ENCODE measurements at regions of chr3 and their contacts with region 1.

Region 1: GRCh38 chr3:8254489-8254888 is 247.1 kb upstream of the LMCD1 start:
- DNase-seq: no peak
- ATAC-seq: no peak
- H3K4me3 ChIP-seq: no peak overlapping the region
- H3K4me3 Mint-ChIP-seq: no peak overlapping the region
- H3K27ac ChIP-seq: no peak overlapping the region
- H3K27ac Mint-ChIP-seq: no peak overlapping the region
- H3K4me1 ChIP-seq: no peaks in the 10 kb centered on the region
- H3K4me1 Mint-ChIP-seq: no peaks in the 10 kb centered on the region
- H3K27me3 ChIP-seq: no peaks in the 10 kb centered on the region
- H3K27me3 Mint-ChIP-seq: peaks cover 11% of the 10 kb centered on the region
- CTCF ChIP-seq: no peak

Region 2: DNA sequence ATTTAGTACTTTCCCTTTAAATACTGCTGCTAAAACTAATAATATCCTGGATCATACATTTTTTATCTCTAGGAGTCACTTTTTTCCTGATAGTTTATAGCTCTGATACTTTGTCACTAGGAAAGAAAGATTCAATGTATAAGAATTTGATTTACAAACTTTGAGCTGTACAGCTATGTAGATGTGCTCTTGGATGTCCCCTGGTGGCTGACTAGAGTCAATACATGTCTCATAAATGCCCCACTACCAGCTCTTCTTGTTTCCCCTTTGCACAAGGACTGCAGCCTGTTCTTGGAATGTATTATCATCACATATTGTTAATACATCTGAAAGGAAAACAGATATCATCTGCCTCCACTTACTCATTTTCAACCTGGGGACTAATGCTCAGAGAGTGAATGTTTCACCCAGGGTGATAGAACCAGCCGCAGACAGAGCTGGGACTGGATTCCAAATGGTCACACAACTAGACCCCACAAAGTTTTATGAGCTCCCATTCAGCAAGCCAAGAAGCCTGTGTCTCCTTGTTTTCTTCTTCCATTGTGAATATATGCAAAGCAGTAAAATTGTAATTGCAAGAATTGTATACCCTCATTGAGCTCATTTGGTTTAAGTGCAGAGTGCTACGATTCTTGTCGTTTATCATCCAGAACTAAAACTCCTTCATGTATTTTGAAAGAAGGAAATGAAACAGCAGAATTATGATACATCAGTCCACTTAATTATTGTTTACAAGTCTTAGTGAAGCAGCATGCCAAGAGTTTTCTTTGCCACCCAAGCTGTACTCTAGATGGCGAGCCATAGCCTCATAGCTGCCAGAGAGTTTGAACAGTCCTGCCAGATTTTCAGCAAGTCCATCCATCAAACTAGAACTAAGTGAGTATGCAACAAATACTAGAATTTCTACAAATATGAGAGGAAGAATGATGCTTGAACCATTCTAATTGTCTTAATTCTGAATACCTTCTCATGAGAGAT is 14.5 kb before region 1 on chr3:
- CTCF ChIA-PET with region 1: interaction called, 14 read pairs
- POLR2A ChIA-PET with region 1: no interaction called
- intact Hi-C with region 1: no loop called
- DNase-seq: peak in 4 of 9 experiments; percentile 11 to 51 (median 32)
- ATAC-seq: no peak
- H3K4me3 ChIP-seq: no peak overlapping the region
- H3K4me3 Mint-ChIP-seq: no peak overlapping the region
- H3K27ac ChIP-seq: no peak overlapping the region
- H3K27ac Mint-ChIP-seq: no peak overlapping the region
- H3K4me1 ChIP-seq: no peaks in the 10 kb centered on the region
- H3K4me1 Mint-ChIP-seq: no peaks in the 10 kb centered on the region
- H3K27me3 ChIP-seq: no peaks in the 10 kb centered on the region
- H3K27me3 Mint-ChIP-seq: no peaks in the 10 kb centered on the region
- CTCF ChIP-seq: peak; percentile 77

Region 3: GRCh38 chr3:8298021-8298954 is 43.8 kb after region 1 on chr3:
- CTCF ChIA-PET with region 1: no interaction called
- POLR2A ChIA-PET with region 1: no interaction called
- intact Hi-C with region 1: no loop called
- DNase-seq: no peak
- ATAC-seq: no peak
- H3K4me3 ChIP-seq: no peak overlapping the region
- H3K4me3 Mint-ChIP-seq: no peak overlapping the region
- H3K27ac ChIP-seq: no peak overlapping the region
- H3K27ac Mint-ChIP-seq: no peak overlapping the region
- H3K4me1 ChIP-seq: no peaks in the 10 kb centered on the region
- H3K4me1 Mint-ChIP-seq: peaks cover 6% of the 10 kb centered on the region
- H3K27me3 ChIP-seq: no peaks in the 10 kb centered on the region
- H3K27me3 Mint-ChIP-seq: no peaks in the 10 kb centered on the region
- CTCF ChIP-seq: no peak

Measured in CD8-positive, alpha-beta T cell (primary cell).